Gastrocnemius medialis (tissue), 4 donors: ENCODE measurements at regions of chr4 and their contacts with region 1.

Region 1: DNA sequence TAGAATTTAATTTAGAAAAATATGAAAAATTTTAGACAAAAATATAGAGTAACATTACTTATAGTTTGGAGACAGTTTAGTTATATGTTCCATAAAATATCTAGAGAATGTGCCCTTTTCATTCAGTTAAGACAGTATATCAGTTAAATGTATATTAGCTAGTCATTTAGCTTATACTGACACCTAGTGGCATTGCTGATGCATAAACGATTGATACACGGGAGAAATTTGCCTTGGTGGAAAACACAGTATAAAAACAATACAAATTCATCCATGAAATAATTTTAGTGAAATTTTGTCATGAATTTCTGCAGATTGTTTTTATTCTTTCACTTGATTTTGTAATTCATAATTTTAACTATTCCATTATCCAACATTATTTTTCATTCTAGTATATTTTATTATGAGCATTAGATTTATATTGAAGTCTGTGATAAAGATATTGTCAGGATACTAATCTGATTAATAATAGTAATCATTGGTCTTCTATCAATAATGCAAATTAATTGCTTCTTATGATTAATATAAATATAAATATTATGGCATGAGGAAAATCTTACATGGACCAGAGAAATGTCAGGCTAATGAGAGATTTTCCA is 219.0 kb downstream of the TLL1 start:
- DNase-seq: no peak
- ATAC-seq: no peak
- H3K4me3 ChIP-seq: no peak overlapping the region
- H3K27ac ChIP-seq: no peak overlapping the region
- H3K4me1 ChIP-seq: no peaks in the 10 kb centered on the region
- H3K27me3 ChIP-seq: no peaks in the 10 kb centered on the region
- CTCF ChIP-seq: peak; percentile 39 to 77 (median 67)
- POLR2A ChIP-seq: no peak

Region 2: DNA sequence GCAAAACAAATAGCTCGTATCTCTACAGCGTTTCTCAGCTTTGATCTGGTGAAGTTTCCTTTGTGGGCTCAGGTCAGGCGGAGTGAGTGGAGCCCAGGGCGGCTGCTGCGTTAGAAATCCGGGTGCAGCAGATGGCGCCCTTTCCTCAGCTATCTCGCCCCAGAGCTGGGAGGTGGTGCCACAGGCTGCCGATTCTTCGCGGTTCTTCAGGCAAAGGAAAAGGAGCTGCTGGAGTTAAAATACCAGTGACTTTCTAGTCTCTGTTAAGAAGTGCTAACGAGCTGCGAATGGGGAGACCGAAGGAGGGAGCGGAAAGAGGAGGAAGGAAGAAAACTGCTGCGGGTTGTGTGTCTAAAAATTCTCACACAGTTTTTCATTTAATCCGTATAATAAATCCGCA is 598.7 kb before region 1 on chr4:
- in situ Hi-C with region 1: no loop called
- intact Hi-C with region 1: loop called (anchors 5 kb)
- DNase-seq: peak; percentile 35 to 38
- ATAC-seq: peak; percentile 55 to 65
- H3K4me3 ChIP-seq: peak overlapping the region in 1 of 4 donors; percentile 15
- H3K27ac ChIP-seq: no peak overlapping the region
- H3K4me1 ChIP-seq: no peaks in the 10 kb centered on the region
- H3K27me3 ChIP-seq: no peaks in the 10 kb centered on the region
- CTCF ChIP-seq: peak in 4 of 5 experiments; percentile 12 to 62 (median 52)
- POLR2A ChIP-seq: no peak

Region 3: DNA sequence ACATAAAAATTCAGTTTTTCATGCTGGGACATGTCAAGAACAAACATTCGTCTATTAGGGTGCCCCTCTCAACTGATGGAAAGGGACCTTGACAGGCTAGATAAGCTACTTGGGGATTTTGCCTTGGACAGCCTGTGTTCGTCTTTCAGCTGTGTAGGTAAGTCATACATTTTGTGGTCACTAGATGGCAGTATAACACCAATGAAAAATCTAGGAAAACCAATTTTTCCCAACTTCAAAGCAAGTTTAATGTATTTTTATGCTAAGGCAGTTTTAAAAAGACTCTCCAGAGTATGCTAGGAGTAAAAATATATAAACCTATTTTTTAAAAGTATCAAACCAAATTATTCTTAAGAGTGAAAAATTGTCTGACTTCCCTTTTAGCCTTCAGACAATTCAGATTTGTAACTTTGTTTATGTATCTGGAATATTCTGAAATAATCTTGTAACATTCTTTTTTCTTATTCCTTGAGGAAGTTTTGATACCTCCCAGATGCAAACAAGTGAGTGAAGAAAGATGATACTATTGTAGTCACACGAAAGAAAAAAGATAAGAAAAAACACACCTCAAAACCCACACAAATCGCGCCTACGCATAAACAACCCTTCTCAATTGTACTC is 554.9 kb before region 1 on chr4:
- in situ Hi-C with region 1: loop called (anchors 5 kb)
- intact Hi-C with region 1: loop called (anchors 2 kb)
- DNase-seq: no peak
- ATAC-seq: no peak
- H3K4me3 ChIP-seq: no peak overlapping the region
- H3K27ac ChIP-seq: no peak overlapping the region
- H3K4me1 ChIP-seq: no peaks in the 10 kb centered on the region
- H3K27me3 ChIP-seq: no peaks in the 10 kb centered on the region
- CTCF ChIP-seq: peak; percentile 56 to 77 (median 63)
- POLR2A ChIP-seq: no peak

Region 4: GRCh38 chr4:166198041-166198440 is 106.0 kb after region 1 on chr4:
- in situ Hi-C with region 1: no loop called
- intact Hi-C with region 1: no loop called
- DNase-seq: no peak
- ATAC-seq: no peak
- H3K4me3 ChIP-seq: no peak overlapping the region
- H3K27ac ChIP-seq: no peak overlapping the region
- H3K4me1 ChIP-seq: no peaks in the 10 kb centered on the region
- H3K27me3 ChIP-seq: no peaks in the 10 kb centered on the region
- CTCF ChIP-seq: no peak
- POLR2A ChIP-seq: no peak